ENCODE measurements at regions of chr3 and their contacts with region 1.

Region 1: GRCh38 chr3:187679638-187680396 is 9.6 kb upstream of the SST start:
- DNase-seq: peak; percentile 58
- H3K4me3 ChIP-seq: no peak overlapping the region
- H3K27ac ChIP-seq: no peak overlapping the region
- H3K4me1 ChIP-seq: no peaks in the 10 kb centered on the region
- H3K27me3 ChIP-seq: peaks cover 0 to 2% of the 10 kb centered on the region in 2 experiments
- CTCF ChIP-seq: peak; percentile 83 to 89
- POLR2A ChIP-seq: no peak

Region 2: GRCh38 chr3:187223799-187224198 is 456.0 kb before region 1 on chr3:
- CTCF ChIA-PET with region 1: interaction called, 396 read pairs
- POLR2A ChIA-PET with region 1: no interaction called
- dilution Hi-C with region 1: no loop called
- intact Hi-C with region 1: loop called (anchors 1 kb)
- DNase-seq: no peak
- H3K4me3 ChIP-seq: no peak overlapping the region
- H3K27ac ChIP-seq: no peak overlapping the region
- H3K4me1 ChIP-seq: no peaks in the 10 kb centered on the region
- H3K27me3 ChIP-seq: no peaks in the 10 kb centered on the region
- CTCF ChIP-seq: no peak
- POLR2A ChIP-seq: no peak

Region 3: GRCh38 chr3:187319699-187320302 is 360.0 kb before region 1 on chr3:
- CTCF ChIA-PET with region 1: interaction called, 486 read pairs
- POLR2A ChIA-PET with region 1: interaction called, 3 read pairs
- dilution Hi-C with region 1: loop called (anchors 25 kb)
- intact Hi-C with region 1: loop called (anchors 1 kb)
- DNase-seq: peak; percentile 53
- H3K4me3 ChIP-seq: no peak overlapping the region
- H3K27ac ChIP-seq: no peak overlapping the region
- H3K4me1 ChIP-seq: peaks cover 8% of the 10 kb centered on the region
- H3K27me3 ChIP-seq: peaks cover 0 to 3% of the 10 kb centered on the region in 2 experiments
- CTCF ChIP-seq: peak; percentile 60 to 67
- POLR2A ChIP-seq: no peak

Region 4: DNA sequence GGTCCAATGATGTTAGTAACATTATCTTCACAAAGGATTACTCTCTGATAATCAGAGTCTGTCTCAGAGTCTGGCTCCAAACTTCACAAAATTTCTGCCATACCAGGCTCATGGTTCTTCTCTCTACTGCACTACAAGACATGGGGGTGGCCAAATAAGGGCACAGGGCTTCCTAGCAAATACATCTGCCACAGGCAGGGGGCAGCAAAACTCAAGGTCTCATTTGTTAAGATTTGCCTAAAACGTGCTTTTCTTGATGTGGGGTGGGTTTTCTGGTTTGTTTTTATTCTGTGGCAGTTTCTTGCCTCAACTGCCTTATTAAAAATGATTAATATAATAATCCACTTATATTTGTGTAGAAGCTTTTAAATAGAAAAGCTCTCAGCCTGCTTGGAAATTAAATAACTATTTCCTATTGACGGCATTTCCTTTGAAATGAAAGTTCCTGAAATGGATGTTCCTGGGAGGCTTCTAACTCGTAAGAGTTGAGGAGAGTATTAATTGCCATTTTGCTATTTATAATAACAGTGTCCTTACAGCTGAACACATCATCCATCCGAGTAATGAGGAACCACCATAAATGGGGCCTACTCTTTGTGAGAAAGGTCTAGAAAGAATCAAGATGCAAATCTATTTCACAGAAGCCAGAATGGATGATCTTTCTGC is 63.4 kb before region 1 on chr3:
- CTCF ChIA-PET with region 1: interaction called, 47 read pairs
- POLR2A ChIA-PET with region 1: no interaction called
- dilution Hi-C with region 1: no loop called
- intact Hi-C with region 1: loop called (anchors 1 kb)
- DNase-seq: peak; percentile 37
- H3K4me3 ChIP-seq: no peak overlapping the region
- H3K27ac ChIP-seq: no peak overlapping the region
- H3K4me1 ChIP-seq: no peaks in the 10 kb centered on the region
- H3K27me3 ChIP-seq: no peaks in the 10 kb centered on the region
- CTCF ChIP-seq: peak; percentile 64 to 74
- POLR2A ChIP-seq: no peak

Region 5: DNA sequence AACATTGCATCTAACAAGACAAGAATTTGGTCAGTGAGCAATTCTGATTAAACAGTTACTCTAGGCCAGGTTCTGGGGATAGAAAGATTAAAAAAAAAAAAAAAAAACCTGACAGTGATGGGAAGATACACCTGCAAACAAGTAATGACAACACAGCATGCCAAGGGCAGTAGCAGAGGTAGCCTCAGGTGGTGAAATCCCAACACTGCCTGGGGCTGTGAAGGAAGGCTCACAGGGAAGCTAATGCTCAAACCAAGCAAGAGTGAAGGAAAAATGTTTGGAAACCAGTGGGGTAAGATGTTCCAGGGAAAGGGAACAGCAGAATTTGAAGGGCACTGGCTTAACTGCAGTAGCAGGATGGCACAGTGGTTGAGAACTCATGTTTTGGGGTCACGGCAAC is 13.6 kb after region 1 on chr3:
- CTCF ChIA-PET with region 1: interaction called, 15 read pairs
- POLR2A ChIA-PET with region 1: no interaction called
- dilution Hi-C with region 1: no loop called
- intact Hi-C with region 1: no loop called
- DNase-seq: no peak
- H3K4me3 ChIP-seq: no peak overlapping the region
- H3K27ac ChIP-seq: no peak overlapping the region
- H3K4me1 ChIP-seq: no peaks in the 10 kb centered on the region
- H3K27me3 ChIP-seq: peaks cover 3 to 5% of the 10 kb centered on the region in 2 experiments
- CTCF ChIP-seq: no peak
- POLR2A ChIP-seq: no peak

Region 6: GRCh38 chr3:188046561-188047208 is 366.9 kb after region 1 on chr3:
- CTCF ChIA-PET with region 1: no interaction called
- POLR2A ChIA-PET with region 1: no interaction called
- dilution Hi-C with region 1: no loop called
- intact Hi-C with region 1: no loop called
- DNase-seq: peak; percentile 4
- H3K4me3 ChIP-seq: no peak overlapping the region
- H3K27ac ChIP-seq: no peak overlapping the region
- H3K4me1 ChIP-seq: no peaks in the 10 kb centered on the region
- H3K27me3 ChIP-seq: peaks cover 5 to 10% of the 10 kb centered on the region in 2 experiments
- CTCF ChIP-seq: no peak
- POLR2A ChIP-seq: no peak